Heart left ventricle (tissue), 16 donors: ENCODE measurements at regions of chr17 and their contacts with region 1.

Region 1: DNA sequence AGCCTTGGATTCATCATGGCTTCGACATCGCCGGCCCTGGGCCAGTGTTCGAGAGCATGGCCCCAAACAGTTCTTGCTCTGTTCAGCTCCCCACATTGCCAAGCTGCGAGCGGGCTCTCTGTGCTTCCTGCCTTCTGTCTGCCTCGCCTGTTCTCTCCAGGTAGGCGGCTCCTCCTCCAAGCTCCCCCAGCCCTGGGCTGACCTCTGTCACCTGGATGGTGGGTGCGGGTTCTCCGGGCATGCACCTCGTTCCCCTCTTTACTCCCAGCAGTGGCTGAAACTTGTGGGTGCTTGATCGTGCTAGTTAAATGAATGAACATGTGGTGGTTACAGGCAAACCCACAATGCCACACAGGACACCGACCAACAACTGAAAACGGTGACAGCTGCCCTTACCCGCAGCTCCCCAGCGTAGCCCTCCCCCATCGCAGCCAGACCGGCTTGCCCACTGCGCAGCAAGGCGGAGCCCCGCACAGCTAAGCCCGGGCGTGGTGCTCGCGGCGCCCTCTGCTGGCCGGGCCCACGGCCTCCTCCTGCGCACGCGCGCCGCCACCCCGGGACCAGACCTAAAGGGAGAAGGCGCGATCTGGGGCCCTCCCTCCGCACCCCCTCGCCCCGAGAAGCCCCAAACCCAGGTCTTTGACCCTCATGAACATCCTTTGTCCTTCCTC is 23.0 kb upstream of the EIF1 start:
- DNase-seq: peak; percentile 87 to 95 (median 90)
- ATAC-seq: peak; percentile 86 to 94 (median 93)
- H3K4me3 ChIP-seq: peak overlapping the region; percentile 27 to 70 (median 51)
- H3K27ac ChIP-seq: peak overlapping the region; percentile 30 to 87 (median 76)
- H3K4me1 ChIP-seq: peaks cover 0 to 36% (median 14%) of the 10 kb centered on the region in 12 donors
- H3K27me3 ChIP-seq: no peaks in the 10 kb centered on the region
- CTCF ChIP-seq: peak; percentile 89 to 99 (median 98)
- POLR2A ChIP-seq: peak in 1 of 2 donors; percentile 57

Region 2: DNA sequence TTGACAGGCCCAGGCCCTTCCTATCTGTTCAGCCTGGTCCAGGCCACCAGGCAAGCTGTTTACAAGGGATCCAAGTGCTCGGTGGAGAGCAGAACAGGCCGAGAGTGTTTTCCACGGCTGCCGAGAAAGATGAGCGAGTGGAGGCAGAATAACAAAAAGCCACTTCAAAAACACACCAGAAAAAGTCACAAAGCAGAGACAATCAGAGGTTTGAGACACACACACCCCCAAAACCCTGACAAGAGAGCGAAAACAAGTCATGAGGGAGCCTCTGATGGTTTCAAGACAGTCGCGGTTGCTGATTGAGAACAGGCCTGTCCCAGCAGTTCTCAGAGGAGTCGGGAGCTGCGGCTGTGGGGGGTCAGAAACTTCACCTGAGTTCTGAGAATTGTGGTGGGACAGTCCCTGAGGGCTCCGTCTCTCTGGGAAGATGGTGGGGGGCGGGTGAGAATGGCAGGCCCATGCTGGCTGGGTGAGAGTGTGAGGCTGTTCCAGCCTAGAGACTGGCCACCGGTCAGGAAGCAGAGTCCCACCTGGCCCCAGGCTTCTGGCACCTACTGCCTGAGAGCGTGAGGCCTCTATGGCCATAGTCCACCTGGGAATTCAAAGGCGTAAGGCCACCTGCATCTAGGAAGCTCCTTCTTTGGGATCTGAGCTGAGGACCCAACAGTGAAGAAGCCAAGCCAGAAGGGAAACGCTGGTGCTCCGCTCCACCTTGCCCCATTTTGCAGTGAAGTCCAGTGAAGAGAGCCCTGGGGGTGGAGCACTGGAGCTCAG is 1062.7 kb before region 1 on chr17:
- intact Hi-C with region 1: loop called in 1 of 10 experiments (anchors 10 kb)
- DNase-seq: no peak
- ATAC-seq: peak in 1 of 4 donors; percentile 22
- H3K4me3 ChIP-seq: no peak overlapping the region
- H3K27ac ChIP-seq: peak overlapping the region in 2 of 12 donors; percentile 62 to 75
- H3K4me1 ChIP-seq: peaks cover 0 to 22% (median 0%) of the 10 kb centered on the region in 12 donors
- H3K27me3 ChIP-seq: no peaks in the 10 kb centered on the region
- CTCF ChIP-seq: no peak
- POLR2A ChIP-seq: no peak

Region 3: DNA sequence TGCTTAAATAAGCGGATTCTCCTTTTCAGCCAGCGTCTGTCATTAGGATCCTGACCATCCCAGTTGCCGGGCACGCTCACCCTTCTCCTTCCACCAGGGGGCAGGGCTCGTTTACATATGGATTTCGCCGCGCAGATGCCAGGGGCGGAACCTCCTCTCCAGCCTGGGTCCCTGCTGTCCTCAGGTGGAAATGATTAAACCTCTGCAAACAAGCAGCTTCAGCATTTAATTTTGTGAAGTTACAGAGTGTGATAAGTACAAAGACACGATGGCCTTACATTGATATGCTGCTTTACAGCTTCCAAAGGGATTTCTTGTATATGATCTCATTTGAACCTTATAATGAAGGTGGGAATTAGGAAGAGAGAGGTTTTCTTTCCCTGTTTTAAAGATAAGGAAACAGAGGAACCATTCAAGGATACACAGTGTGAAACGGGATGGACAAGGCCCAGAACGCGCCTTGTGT is 862.1 kb before region 1 on chr17:
- intact Hi-C with region 1: loop called in 9 of 10 experiments (anchors 2 to 10 kb)
- DNase-seq: peak; percentile 65 to 78 (median 70)
- ATAC-seq: peak; percentile 61 to 90 (median 86)
- H3K4me3 ChIP-seq: no peak overlapping the region
- H3K27ac ChIP-seq: no peak overlapping the region
- H3K4me1 ChIP-seq: peaks cover 0 to 6% (median 1%) of the 10 kb centered on the region in 12 donors
- H3K27me3 ChIP-seq: peaks cover 0 to 37% (median 8%) of the 10 kb centered on the region in 9 donors
- CTCF ChIP-seq: peak; percentile 72 to 92 (median 83)
- POLR2A ChIP-seq: no peak

Region 4: DNA sequence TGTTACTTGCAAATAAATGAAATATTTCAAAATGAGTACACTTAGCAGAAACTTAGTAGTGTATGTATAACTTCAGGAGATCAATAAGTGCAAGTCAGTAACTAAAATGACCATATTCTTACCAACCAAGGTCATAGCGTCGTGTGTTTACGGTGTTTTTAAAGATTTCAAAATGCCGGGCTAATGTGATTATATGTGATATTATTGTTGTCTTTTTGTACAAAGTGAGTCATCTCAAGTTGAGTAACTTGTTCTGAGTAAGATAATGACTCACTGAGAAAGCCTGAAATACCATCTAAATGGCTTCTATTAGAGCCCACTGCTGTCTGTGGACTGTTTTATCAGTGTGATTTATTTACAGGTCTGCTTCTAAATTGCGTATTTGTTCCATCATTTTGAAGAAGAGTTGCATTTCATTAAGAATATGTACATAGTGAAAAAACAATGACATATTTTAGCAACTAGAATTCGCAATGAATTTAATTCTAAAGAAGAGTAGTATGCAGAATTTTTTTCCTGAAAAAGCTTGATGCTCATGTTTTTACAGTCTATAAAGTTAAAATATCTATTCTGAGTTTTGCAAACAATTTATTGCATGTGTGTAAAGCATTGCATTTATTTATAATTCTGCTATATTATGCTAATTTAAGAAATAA is 811.4 kb before region 1 on chr17:
- intact Hi-C with region 1: loop called in 4 of 10 experiments (anchors 1 to 5 kb)
- DNase-seq: no peak
- ATAC-seq: no peak
- H3K4me3 ChIP-seq: no peak overlapping the region
- H3K27ac ChIP-seq: no peak overlapping the region
- H3K4me1 ChIP-seq: peaks cover 0 to 11% (median 2%) of the 10 kb centered on the region in 12 donors
- H3K27me3 ChIP-seq: peaks cover 0 to 10% (median 0%) of the 10 kb centered on the region in 9 donors
- CTCF ChIP-seq: no peak
- POLR2A ChIP-seq: no peak

Region 5: DNA sequence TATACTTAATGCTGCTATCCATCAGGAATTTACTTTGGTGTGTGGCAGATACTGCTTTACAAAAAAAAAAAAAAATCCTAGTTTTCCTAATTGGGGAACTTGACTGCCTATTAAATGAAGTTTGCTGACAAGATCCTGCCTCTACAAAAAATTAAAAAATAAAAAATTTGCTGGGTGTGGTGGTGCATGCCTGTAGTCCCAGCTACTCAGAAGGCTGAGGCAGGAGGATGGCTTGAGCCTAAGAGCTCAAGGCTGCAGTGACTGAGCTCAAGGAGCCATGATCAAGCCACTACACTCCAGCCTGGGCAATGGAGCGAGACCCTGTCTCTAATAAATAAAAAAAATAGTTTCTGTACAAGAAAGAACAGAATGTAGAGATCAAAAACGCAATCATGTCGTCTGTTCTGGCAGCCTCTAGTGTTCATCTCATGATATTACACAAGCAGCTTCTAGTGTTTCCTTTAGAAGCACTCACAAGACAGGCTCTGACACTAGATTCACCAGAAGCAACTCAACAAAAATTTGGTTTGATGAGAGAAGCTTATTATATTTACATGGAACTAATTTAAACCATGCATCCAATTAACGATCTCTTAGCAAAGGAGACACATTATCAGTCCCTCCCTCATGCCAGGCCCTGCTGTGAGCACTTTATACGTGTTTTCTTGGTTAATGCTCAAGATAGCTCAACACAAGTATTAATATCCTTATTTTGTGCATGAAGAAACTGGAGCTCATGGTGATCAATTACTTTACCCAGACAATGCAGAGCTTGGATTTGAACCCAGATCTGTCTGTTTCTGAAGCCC is 343.4 kb before region 1 on chr17:
- intact Hi-C with region 1: loop called in 2 of 10 experiments (anchors 10 kb)
- DNase-seq: no peak
- ATAC-seq: peak in 1 of 4 donors; percentile 41
- H3K4me3 ChIP-seq: no peak overlapping the region
- H3K27ac ChIP-seq: no peak overlapping the region
- H3K4me1 ChIP-seq: no peaks in the 10 kb centered on the region
- H3K27me3 ChIP-seq: no peaks in the 10 kb centered on the region
- CTCF ChIP-seq: peak; percentile 35 to 73 (median 59)
- POLR2A ChIP-seq: no peak

Region 6: DNA sequence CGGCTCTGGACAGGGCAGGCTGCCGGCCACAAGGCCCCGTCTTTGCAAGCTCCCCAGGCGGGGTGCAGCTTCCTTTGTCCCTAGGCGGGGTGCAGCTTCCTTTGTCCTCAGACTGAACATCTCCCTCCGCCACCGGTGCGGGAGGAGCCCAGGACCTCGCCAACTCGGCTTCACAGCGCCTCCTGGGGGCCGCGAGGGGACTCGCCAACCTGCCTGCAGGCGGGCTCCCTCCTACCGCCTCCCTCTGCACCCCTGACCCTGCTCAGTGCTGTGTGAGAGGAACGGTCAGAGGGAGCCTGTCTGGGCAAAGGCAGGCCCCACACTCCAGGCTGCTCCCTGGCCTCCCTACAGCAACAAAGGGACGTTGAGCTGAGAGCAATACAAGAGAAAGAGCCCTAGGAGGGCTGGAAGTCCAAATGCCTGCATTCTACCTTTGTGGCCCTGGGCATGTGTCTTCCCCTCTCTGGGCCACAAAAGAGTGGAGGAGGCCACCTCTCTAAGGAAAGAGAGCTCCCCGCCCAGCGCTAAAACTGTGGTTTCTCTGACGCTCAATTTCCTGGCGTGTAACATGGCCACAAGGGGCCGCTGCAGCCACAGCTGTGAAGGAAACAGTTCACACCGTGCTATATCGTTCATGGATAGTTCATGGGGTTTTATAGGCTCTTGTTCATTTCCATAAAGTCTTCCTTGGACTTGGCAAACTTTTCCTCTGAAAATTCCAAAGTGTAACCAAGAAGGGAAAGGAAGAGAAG is 116.7 kb before region 1 on chr17:
- intact Hi-C with region 1: loop called in 8 of 10 experiments (anchors 1 to 5 kb)
- DNase-seq: peak; percentile 70 to 90 (median 77)
- ATAC-seq: peak; percentile 90 to 92 (median 90)
- H3K4me3 ChIP-seq: peak overlapping the region in 10 of 12 donors; percentile 18 to 42 (median 29)
- H3K27ac ChIP-seq: peak overlapping the region in 2 of 12 donors; percentile 10 to 54
- H3K4me1 ChIP-seq: peaks cover 0 to 20% (median 10%) of the 10 kb centered on the region in 12 donors
- H3K27me3 ChIP-seq: peaks cover 0 to 19% (median 2%) of the 10 kb centered on the region in 9 donors
- CTCF ChIP-seq: peak; percentile 78 to 93 (median 83)
- POLR2A ChIP-seq: no peak

Region 7: GRCh38 chr17:41563607-41564170 is 102.0 kb before region 1 on chr17:
- intact Hi-C with region 1: no loop called
- DNase-seq: no peak
- ATAC-seq: no peak
- H3K4me3 ChIP-seq: no peak overlapping the region
- H3K27ac ChIP-seq: no peak overlapping the region
- H3K4me1 ChIP-seq: no peaks in the 10 kb centered on the region
- H3K27me3 ChIP-seq: peaks cover 0 to 61% (median 13%) of the 10 kb centered on the region in 9 donors
- CTCF ChIP-seq: no peak
- POLR2A ChIP-seq: no peak

Region 8: GRCh38 chr17:41648411-41649195 is 17.1 kb before region 1 on chr17:
- intact Hi-C with region 1: loop called in 2 of 10 experiments (anchors 1 kb)
- DNase-seq: peak; percentile 83 to 91 (median 85)
- ATAC-seq: peak; percentile 90 to 96 (median 92)
- H3K4me3 ChIP-seq: peak overlapping the region in 11 of 12 donors; percentile 2 to 57 (median 45)
- H3K27ac ChIP-seq: peak overlapping the region in 2 of 12 donors; percentile 38 to 41
- H3K4me1 ChIP-seq: peaks cover 0 to 29% (median 8%) of the 10 kb centered on the region in 12 donors
- H3K27me3 ChIP-seq: no peaks in the 10 kb centered on the region
- CTCF ChIP-seq: peak; percentile 84 to 98 (median 92)
- POLR2A ChIP-seq: no peak

Region 9: GRCh38 chr17:41678907-41679739 is 13.4 kb after region 1 on chr17:
- intact Hi-C with region 1: no loop called
- DNase-seq: peak in 2 of 5 donors; percentile 24 to 36
- ATAC-seq: peak; percentile 41 to 90 (median 77)
- H3K4me3 ChIP-seq: peak overlapping the region in 10 of 12 donors; percentile 16 to 52 (median 35)
- H3K27ac ChIP-seq: peak overlapping the region; percentile 65 to 92 (median 76)
- H3K4me1 ChIP-seq: peaks cover 0 to 46% (median 2%) of the 10 kb centered on the region in 12 donors
- H3K27me3 ChIP-seq: no peaks in the 10 kb centered on the region
- CTCF ChIP-seq: peak in 8 of 12 donors; percentile 16 to 50 (median 22)
- POLR2A ChIP-seq: no peak